ENCODE measurements at regions of chr7 and their contacts with region 1.

Region 1: DNA sequence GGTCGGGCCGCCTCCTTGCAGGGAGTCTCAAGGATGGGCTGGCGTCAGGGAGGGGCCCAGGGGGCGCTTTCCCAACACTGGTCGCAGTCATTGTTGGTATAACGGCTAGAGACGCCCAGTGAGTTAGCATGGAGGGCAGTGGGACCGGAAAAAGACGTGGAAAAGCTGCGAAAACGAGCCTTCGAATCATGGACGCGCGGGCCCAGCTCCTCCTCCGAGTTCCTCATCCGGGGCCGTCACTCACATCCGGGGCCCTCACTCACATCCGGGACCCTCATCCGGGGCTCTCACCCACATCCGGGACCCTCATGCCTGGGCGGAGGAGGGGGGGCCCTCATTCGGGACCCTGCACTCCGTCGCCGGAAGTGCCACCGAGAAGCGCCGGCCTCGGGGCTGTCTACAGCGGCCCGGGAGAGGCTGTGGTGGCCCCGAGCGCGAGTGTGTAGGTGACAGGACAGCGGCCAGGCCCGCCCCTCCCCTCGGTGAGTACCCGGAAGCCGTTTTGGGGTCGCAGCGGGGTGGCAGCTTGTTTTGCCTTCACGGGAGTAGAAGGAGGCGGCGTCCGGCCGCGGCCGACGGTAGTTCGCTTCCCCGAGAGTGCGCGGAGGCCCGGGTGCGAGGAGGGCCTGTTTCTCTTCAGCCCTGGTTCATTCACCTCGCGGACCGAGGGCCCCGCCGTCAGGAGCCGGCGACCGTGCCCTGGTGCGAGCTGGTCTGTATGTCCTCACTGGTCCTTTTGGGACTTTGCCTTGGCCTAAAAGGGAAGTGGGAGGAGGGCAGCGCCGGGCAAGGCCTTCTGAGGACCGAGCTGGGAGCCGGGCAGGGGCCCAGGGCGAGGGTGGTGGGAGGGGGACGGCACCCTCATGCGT is at the start of gene ZNF655:
- DNase-seq: peak; percentile 92
- H3K4me3 Mint-ChIP-seq: peak within 1 kb of the TSS; percentile 99
- H3K27ac Mint-ChIP-seq: peak within 1 kb of the TSS; percentile 98
- H3K4me1 Mint-ChIP-seq: peaks cover 49% of the 10 kb centered on the region
- H3K27me3 Mint-ChIP-seq: no peaks in the 10 kb centered on the region
- total RNA-seq, gene ZNF655: 102 to 103 TPM

Region 2: DNA sequence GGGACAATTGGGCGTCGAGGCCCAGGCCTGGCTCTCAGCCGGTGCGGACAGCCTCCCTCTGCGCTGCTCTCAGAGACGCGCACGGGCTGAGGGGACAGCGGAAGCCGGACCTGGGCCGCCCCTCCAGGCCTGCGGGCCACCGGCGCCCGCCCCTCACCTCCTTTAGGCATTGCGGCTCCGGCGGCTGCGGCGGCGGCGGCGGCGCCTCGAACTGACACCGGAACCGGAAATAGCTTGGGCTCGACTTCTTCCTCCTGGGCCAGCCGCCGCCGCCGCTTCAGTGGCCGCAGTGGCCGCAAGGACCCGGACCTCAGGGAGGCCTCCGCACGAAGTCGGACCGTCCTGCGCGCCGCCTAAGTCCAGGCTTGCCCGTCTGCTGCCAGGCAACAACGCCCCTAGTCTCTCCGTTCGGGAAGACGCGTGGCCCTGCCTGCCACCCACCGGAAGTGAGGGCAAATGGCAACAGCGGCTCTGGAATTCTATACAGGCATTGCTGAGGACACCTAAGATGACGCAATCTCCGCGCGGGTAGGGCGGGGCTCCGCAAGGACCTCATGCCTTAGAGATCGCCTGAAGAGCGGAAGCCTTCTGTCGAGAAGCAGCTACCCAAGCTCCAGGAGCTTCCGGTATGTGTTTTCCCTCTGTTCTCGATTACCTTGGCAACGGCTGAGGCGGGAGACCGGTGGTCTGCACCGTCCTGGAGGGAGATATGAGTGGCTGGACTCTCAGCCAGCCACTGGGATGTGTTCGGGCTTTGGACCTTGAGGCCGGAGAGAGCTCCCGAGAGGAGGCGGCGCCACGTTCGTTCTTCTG is 150.0 kb before region 1 on chr7 and contains the starts of genes BUD31 and PDAP1:
- CTCF ChIA-PET with region 1: interaction called, 3 read pairs
- POLR2A ChIA-PET with region 1: interaction called, 24 read pairs
- DNase-seq: peak; percentile 95
- H3K4me3 Mint-ChIP-seq: peak within 1 kb of the TSS; percentile 86
- H3K27ac Mint-ChIP-seq: peak within 1 kb of the TSS; percentile 90
- H3K4me1 Mint-ChIP-seq: peaks cover 58% of the 10 kb centered on the region
- H3K27me3 Mint-ChIP-seq: no peaks in the 10 kb centered on the region
- total RNA-seq, gene BUD31: 104 to 106 TPM
- total RNA-seq, gene PDAP1: 93.8 to 103 TPM

Region 3: DNA sequence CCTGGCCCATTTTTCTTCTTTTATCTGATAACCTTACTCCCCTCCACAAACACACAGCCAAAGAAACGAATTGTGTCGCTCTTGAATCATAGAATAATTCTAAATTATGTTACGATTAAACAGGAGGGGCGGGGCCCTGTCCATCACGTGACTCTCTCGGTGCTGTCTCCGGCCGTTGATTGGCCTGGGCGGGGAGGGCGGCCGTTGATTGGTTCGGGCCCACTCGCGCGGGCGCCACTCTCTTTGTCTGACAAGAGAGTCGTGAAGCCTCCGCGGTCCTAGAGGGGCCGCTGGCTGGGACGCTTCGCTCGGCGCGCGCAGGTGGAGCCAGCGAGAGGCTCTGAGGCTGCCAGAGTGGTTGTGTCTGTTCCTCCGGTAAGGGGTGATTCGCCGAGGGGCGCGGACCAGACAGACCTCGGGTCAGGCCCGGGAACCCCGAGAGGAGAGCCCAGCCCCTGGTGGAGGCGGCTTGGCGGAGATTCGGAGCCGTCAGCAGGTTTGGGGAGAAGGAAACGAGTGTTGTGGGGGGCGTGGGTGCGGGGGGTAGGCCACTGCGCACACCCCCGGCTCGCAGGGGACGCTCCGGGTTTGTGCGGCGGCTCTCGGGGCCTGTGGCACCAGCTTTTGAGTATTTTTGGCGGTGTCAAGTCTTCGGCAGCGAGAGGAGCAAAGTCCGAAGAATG is 85.8 kb before region 1 on chr7 and contains the start of gene ZNF789:
- CTCF ChIA-PET with region 1: no interaction called
- POLR2A ChIA-PET with region 1: interaction called, 17 read pairs
- DNase-seq: peak; percentile 99
- H3K4me3 Mint-ChIP-seq: peak within 1 kb of the TSS; percentile 93
- H3K27ac Mint-ChIP-seq: peak within 1 kb of the TSS; percentile 88
- H3K4me1 Mint-ChIP-seq: peaks cover 39% of the 10 kb centered on the region
- H3K27me3 Mint-ChIP-seq: peaks cover 4% of the 10 kb centered on the region
- total RNA-seq, gene ZNF789: 19.4 to 21.8 TPM

Region 4: DNA sequence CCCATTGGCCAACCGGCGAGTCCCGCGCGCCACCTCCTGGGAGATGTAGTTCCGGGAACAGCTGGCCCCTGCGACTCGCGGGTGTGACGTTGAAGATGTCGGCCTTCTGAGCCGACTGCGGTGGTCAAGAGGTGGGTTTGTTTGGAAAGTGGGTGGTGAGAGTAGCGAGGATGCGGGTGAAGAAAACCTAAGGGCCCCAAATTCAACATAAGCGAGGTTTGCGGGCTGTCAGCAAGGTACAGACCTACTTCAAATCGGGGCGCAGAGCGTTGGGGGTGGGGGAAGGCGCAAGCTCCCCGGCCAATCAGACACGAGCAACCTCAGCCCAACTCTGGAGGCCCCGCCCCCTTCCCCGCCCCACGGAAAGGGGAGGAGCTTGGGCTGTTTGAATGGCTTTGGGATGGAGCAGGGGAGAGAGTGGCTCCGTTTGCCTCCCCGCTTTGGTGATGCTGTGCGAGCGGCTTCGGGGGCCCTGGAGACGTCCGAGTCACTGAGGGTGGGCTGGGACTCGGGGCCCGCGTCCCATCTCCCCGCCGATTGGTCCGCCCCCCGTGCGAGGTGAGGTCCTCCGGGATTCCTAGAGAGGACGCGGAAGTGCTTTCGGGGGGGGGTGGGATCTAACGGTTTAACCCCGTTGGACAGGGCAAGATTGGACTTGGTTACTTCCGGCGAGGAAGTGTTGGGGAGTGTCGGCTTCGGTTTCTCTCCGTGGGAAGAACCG is 53.8 kb before region 1 on chr7 and contains the start of gene ZKSCAN5:
- CTCF ChIA-PET with region 1: interaction called, 7 read pairs
- POLR2A ChIA-PET with region 1: interaction called, 79 read pairs
- DNase-seq: peak; percentile 97
- H3K4me3 Mint-ChIP-seq: peak within 1 kb of the TSS; percentile 88
- H3K27ac Mint-ChIP-seq: peak within 1 kb of the TSS; percentile 96
- H3K4me1 Mint-ChIP-seq: peaks cover 33% of the 10 kb centered on the region
- H3K27me3 Mint-ChIP-seq: no peaks in the 10 kb centered on the region
- total RNA-seq, gene ZKSCAN5: 12.0 to 12.2 TPM

Region 5: GRCh38 chr7:99616359-99617191 is 58.0 kb after region 1 on chr7 and contains the start of gene ZSCAN25:
- CTCF ChIA-PET with region 1: no interaction called
- POLR2A ChIA-PET with region 1: interaction called, 42 read pairs
- DNase-seq: peak; percentile 87
- H3K4me3 Mint-ChIP-seq: peak within 1 kb of the TSS; percentile 89
- H3K27ac Mint-ChIP-seq: peak within 1 kb of the TSS; percentile 86
- H3K4me1 Mint-ChIP-seq: peaks cover 53% of the 10 kb centered on the region
- H3K27me3 Mint-ChIP-seq: peaks cover 2% of the 10 kb centered on the region
- total RNA-seq, gene ZSCAN25: 27.7 TPM

Region 6: DNA sequence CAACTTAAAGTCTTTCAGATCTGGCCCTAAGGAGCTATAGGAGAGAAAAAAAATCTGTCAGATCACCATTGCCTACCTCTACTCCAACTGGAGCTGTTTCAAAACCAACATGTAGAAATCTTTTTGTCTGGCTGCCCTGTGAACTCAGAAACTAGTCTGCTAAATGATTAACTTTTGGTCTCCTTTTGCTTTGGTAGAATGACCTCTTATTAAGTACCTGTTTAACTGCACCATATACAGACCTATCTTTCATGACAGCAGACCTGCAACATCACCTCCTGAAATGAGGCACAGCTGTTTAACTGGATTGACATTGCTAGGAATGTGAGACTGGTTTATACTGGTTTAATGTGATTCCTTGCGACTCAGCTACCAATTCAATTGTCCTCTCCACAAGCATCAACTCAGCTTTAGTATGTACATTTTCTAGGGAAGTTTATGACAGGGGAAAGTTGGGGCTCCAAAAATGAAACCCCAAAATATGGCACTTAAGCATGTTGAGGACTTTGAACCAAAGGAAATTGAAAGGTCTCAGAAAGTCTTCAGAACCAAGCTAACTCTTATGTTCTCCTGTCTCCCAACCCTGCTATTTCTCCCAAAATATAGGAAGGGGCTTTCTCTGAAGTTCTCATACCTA is 271.1 kb after region 1 on chr7:
- CTCF ChIA-PET with region 1: no interaction called
- POLR2A ChIA-PET with region 1: no interaction called
- DNase-seq: no peak
- H3K4me3 Mint-ChIP-seq: no peak overlapping the region
- H3K27ac Mint-ChIP-seq: no peak overlapping the region
- H3K4me1 Mint-ChIP-seq: no peaks in the 10 kb centered on the region
- H3K27me3 Mint-ChIP-seq: peaks cover 18% of the 10 kb centered on the region

Region 7: DNA sequence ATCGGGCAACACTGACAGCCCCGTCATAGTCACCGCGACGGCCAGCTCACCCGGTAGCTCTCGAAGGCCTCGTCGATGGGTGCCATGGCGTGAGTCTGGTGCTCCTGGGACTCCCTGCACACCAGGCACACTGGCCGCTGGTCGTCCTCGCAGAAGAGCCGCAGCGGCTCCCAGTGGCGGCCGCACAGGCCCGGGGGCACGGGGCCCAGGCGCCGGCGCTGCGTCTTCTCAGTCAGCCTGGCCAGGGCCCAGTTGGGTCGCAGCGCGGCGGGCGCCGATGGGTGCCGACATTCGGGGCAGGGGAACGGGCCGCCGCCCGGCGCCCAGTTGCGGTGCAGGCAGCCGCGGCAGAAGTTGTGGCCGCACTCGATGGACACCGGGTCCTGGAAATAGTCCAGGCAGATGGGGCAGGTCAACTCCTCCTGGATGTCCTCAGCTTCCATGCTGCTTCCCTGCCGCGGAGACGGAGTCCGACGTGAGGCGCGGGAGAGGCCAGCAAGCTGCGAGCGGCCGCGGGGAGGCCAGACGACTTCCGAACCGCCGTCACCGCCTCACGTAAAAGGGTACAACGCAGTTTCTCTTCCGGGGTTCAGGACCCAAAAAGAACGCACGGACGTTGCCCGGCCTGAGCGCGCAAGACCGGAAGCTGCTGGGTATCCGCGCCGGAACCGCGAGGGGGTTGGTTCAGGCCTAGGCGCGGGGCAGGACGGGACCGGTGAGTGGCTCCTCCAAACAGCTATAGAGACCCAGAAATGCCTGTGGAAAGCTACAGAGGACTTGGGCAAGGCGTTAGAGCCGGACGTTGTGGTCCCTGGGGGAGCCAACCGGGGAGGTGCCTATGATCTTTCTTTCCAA is 360.6 kb after region 1 on chr7 and contains the start of gene TRIM4:
- CTCF ChIA-PET with region 1: no interaction called
- POLR2A ChIA-PET with region 1: interaction called, 12 read pairs
- DNase-seq: peak; percentile 93
- H3K4me3 Mint-ChIP-seq: peak within 1 kb of the TSS; percentile 96
- H3K27ac Mint-ChIP-seq: peak within 1 kb of the TSS; percentile 96
- H3K4me1 Mint-ChIP-seq: peaks cover 53% of the 10 kb centered on the region
- H3K27me3 Mint-ChIP-seq: no peaks in the 10 kb centered on the region
- total RNA-seq, gene TRIM4: 28.9 to 29.5 TPM

Measured in activated CD4-positive, alpha-beta memory T cell treated with anti-CD3 and anti-CD28 coated beads, Interleukin-2, amount 10 ng/mL, durations not matched to agents 7 days and 5 days (primary cell).